ENCODE measurements at regions of chr6 and their contacts with region 1.

Region 1: DNA sequence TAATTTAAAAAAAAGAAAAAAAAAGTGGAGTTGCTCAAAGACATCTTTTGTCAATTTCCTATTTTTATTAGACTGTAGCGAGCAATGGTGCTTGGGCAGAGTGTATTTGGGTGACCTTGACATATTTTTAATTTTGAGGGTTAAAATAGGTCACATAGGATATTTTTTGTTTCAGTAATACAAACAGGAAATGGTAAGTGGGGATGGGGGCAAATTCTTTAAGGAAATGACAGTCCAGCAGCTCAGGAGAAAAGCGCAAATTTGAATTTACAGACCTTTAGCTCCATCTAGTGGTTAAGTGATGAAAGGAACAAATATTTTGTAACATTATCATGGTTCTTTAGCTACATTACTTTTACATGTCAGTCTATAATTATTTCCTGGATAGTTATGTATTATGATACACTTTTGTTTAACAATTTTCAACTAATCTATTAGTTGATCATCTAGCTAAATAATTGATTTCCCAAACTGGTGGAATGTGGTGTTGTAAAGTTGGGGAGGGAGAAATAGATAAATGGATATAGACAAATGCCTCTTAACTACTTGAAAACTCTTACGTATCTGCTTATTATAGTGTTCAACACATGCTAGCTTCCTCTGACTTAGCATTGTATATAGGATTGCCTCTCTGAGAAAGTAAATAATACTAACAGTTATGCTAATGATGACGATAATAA is 10.0 kb downstream of the CITED2 start:
- DNase-seq: peak in 2 of 9 experiments; percentile 64 to 74
- ATAC-seq: peak; percentile 63
- H3K4me3 ChIP-seq: no peak overlapping the region
- H3K4me3 Mint-ChIP-seq: no peak overlapping the region
- H3K27ac ChIP-seq: no peak overlapping the region
- H3K27ac Mint-ChIP-seq: no peak overlapping the region
- H3K4me1 ChIP-seq: peaks cover 4% of the 10 kb centered on the region
- H3K4me1 Mint-ChIP-seq: peaks cover 46% of the 10 kb centered on the region
- H3K27me3 ChIP-seq: no peaks in the 10 kb centered on the region
- H3K27me3 Mint-ChIP-seq: no peaks in the 10 kb centered on the region
- CTCF ChIP-seq: peak; percentile 97

Region 2: GRCh38 chr6:138692058-138692977 is 672.1 kb before region 1 on chr6:
- CTCF ChIA-PET with region 1: no interaction called
- POLR2A ChIA-PET with region 1: no interaction called
- intact Hi-C with region 1: loop called in 1 of 2 experiments (anchors 5 kb)
- DNase-seq: peak; percentile 14 to 78 (median 48)
- ATAC-seq: peak; percentile 68
- H3K4me3 ChIP-seq: peak overlapping the region in 1 of 2 experiments; percentile 23
- H3K4me3 Mint-ChIP-seq: peak overlapping the region; percentile 81
- H3K27ac ChIP-seq: no peak overlapping the region
- H3K27ac Mint-ChIP-seq: no peak overlapping the region
- H3K4me1 ChIP-seq: peaks cover 5% of the 10 kb centered on the region
- H3K4me1 Mint-ChIP-seq: peaks cover 10% of the 10 kb centered on the region
- H3K27me3 ChIP-seq: peaks cover 0 to 6% of the 10 kb centered on the region in 2 experiments
- H3K27me3 Mint-ChIP-seq: peaks cover 30% of the 10 kb centered on the region
- CTCF ChIP-seq: peak; percentile 65

Region 3: DNA sequence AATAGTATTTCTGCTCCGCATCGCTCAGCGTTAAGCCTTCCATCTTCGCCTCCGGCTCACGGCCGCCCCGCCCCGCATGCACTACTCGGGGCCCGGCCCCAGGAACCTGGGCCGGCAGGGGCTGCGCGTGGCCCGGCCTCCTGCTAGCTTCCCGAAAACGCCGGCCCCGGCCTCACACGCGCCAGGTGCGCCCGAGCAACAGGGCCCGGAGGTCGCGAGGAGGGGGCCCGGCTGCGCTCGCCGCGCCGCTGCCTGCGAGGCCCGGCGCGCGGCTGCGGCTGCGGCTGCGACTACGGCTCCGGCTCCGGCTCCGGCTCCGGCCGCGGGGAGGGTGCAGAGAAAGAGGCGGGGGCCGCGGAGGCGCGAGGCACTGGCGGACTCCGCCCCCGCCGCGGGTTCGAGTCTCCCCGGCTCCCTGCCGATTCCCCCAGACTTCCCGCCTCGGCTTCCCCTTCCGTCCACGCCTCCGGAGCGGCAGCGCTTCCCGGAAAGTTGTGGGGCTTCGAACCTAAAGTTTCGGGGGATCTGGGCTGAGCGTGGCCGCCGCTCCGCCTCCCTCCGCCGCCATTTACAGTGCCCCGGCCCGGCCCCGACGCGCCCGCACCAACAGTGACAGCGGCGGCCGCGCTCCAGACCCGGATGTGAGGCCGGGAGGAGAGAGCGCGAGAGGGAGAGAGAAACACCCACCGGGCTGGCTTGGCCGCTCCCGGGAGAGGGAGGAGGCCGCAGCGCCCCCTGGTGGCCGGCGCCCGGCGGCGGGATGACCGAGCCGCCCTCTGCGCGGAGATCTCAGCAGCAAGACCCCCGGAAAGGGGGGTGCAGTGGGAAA is 376.6 kb before region 1 on chr6 and contains the start of gene REPS1:
- CTCF ChIA-PET with region 1: interaction called, 21 read pairs
- POLR2A ChIA-PET with region 1: no interaction called
- intact Hi-C with region 1: loop called in 1 of 2 experiments (anchors 5 kb)
- DNase-seq: peak; percentile 79 to 97 (median 90)
- ATAC-seq: peak; percentile 88
- H3K4me3 ChIP-seq: peak within 1 kb of the TSS; percentile 74 to 79
- H3K4me3 Mint-ChIP-seq: peak within 1 kb of the TSS; percentile 86
- H3K27ac ChIP-seq: peak within 1 kb of the TSS; percentile 68 to 81
- H3K27ac Mint-ChIP-seq: peak within 1 kb of the TSS; percentile 85
- H3K4me1 ChIP-seq: peaks cover 42% of the 10 kb centered on the region
- H3K4me1 Mint-ChIP-seq: peaks cover 6% of the 10 kb centered on the region
- H3K27me3 ChIP-seq: no peaks in the 10 kb centered on the region
- H3K27me3 Mint-ChIP-seq: no peaks in the 10 kb centered on the region
- CTCF ChIP-seq: peak; percentile 99
- total RNA-seq, gene REPS1: 50.4 to 60.3 TPM

Region 4: DNA sequence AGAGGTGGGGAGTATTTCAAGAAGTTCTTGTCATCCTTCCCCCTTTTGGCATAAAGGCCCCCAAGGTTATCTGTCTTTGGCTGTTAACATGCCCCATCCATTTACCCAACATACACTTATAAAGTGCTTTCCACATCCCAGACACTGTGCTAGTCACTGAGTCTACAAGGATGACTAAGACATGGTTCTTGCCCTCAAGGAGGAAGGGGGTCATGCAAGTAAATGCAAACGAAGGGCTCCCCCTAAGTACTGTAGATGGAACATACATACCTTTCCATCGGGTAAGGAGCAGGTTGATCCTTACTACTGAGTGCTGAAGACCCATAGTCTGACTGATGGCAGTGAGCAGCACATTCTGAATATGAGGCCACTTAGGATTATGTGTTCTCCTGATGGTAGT is 191.3 kb before region 1 on chr6:
- CTCF ChIA-PET with region 1: interaction called, 12 read pairs
- POLR2A ChIA-PET with region 1: no interaction called
- intact Hi-C with region 1: loop called in 1 of 2 experiments (anchors 5 kb)
- DNase-seq: peak in 4 of 9 experiments; percentile 32 to 74 (median 50)
- ATAC-seq: peak; percentile 84
- H3K4me3 ChIP-seq: no peak overlapping the region
- H3K4me3 Mint-ChIP-seq: peak overlapping the region; percentile 40
- H3K27ac ChIP-seq: peak overlapping the region in 1 of 2 experiments; percentile 34
- H3K27ac Mint-ChIP-seq: peak overlapping the region; percentile 80
- H3K4me1 ChIP-seq: peaks cover 92% of the 10 kb centered on the region
- H3K4me1 Mint-ChIP-seq: peaks cover 93% of the 10 kb centered on the region
- H3K27me3 ChIP-seq: no peaks in the 10 kb centered on the region
- H3K27me3 Mint-ChIP-seq: no peaks in the 10 kb centered on the region
- CTCF ChIP-seq: no peak

Region 5: GRCh38 chr6:139250296-139251044 is 114.0 kb before region 1 on chr6:
- CTCF ChIA-PET with region 1: interaction called, 13 read pairs
- POLR2A ChIA-PET with region 1: no interaction called
- intact Hi-C with region 1: loop called in 1 of 2 experiments (anchors 1 kb)
- DNase-seq: peak; percentile 22 to 79 (median 57)
- ATAC-seq: peak; percentile 96
- H3K4me3 ChIP-seq: no peak overlapping the region
- H3K4me3 Mint-ChIP-seq: no peak overlapping the region
- H3K27ac ChIP-seq: peak overlapping the region in 1 of 2 experiments; percentile 44
- H3K27ac Mint-ChIP-seq: no peak overlapping the region
- H3K4me1 ChIP-seq: peaks cover 3% of the 10 kb centered on the region
- H3K4me1 Mint-ChIP-seq: peaks cover 30% of the 10 kb centered on the region
- H3K27me3 ChIP-seq: no peaks in the 10 kb centered on the region
- H3K27me3 Mint-ChIP-seq: no peaks in the 10 kb centered on the region
- CTCF ChIP-seq: peak; percentile 53

Region 6: DNA sequence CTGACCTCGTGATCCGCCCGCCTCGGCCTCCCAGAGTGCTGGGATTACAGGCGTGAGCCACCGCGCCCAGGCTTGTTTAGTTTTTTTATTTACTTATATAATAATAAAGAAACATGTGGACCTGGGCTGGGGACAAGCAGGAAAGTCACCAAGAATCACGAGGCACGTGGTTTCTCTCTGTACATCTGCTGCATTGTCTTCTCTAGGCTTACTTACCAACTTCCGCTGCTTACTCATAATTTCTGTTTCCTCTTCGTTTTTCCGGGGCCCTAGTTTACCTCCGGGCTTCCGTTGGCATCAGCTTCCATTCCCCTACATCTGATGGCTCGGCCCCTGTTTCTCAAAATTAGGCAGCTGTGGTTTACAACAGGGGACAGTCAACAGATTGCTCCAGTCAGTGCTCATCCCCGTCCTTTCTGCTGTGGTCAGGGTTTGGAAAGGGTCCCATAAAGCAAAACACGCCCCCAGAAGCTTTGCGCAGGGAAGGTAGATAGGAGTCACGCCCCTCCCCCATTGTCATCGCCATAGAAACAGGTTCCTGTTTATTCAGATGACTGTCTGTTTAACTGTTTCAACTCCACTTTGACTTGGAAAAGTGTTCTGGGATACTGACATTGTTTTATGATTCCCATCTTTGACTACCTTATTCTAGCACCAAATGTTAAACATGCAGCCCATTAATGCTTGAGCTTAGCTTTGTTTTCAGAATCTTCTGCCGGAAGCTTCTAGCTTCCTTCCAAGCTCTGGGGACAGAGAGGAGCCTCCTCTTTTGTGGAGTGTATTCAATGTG is 40.7 kb before region 1 on chr6:
- CTCF ChIA-PET with region 1: interaction called, 4 read pairs
- POLR2A ChIA-PET with region 1: no interaction called
- intact Hi-C with region 1: loop called in 1 of 2 experiments (anchors 2 kb)
- DNase-seq: peak; percentile 56 to 91 (median 84)
- ATAC-seq: peak; percentile 87
- H3K4me3 ChIP-seq: peak overlapping the region; percentile 54 to 59
- H3K4me3 Mint-ChIP-seq: peak overlapping the region; percentile 89
- H3K27ac ChIP-seq: peak overlapping the region; percentile 82 to 97
- H3K27ac Mint-ChIP-seq: peak overlapping the region; percentile 97
- H3K4me1 ChIP-seq: peaks cover 18% of the 10 kb centered on the region
- H3K4me1 Mint-ChIP-seq: peaks cover 35% of the 10 kb centered on the region
- H3K27me3 ChIP-seq: no peaks in the 10 kb centered on the region
- H3K27me3 Mint-ChIP-seq: no peaks in the 10 kb centered on the region
- CTCF ChIP-seq: no peak

Region 7: DNA sequence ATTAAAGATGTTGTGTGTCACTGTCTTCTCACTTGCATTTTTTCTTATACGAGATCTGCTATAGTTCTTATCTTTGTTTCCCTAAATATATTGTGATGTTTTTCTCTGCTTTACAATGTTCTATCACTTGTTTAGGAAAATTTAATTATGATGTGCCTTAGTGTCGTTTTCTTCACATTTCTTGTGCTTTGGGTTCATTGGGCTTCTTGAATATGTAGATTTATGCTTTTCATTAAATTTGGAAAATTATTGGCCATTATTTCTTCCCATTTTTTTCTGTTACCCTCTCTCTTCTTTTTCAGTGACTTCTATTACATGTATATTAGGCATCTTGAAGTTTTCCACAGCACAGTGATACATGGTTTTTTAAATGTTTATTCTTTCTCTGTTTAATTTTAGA is 23.4 kb before region 1 on chr6:
- CTCF ChIA-PET with region 1: no interaction called
- POLR2A ChIA-PET with region 1: no interaction called
- intact Hi-C with region 1: no loop called
- DNase-seq: no peak
- ATAC-seq: no peak
- H3K4me3 ChIP-seq: no peak overlapping the region
- H3K4me3 Mint-ChIP-seq: no peak overlapping the region
- H3K27ac ChIP-seq: no peak overlapping the region
- H3K27ac Mint-ChIP-seq: no peak overlapping the region
- H3K4me1 ChIP-seq: peaks cover 22% of the 10 kb centered on the region
- H3K4me1 Mint-ChIP-seq: peaks cover 25% of the 10 kb centered on the region
- H3K27me3 ChIP-seq: no peaks in the 10 kb centered on the region
- H3K27me3 Mint-ChIP-seq: no peaks in the 10 kb centered on the region
- CTCF ChIP-seq: no peak

Region 8: GRCh38 chr6:139568956-139569548 is 204.6 kb after region 1 on chr6:
- CTCF ChIA-PET with region 1: no interaction called
- POLR2A ChIA-PET with region 1: no interaction called
- intact Hi-C with region 1: no loop called
- DNase-seq: no peak
- ATAC-seq: no peak
- H3K4me3 ChIP-seq: no peak overlapping the region
- H3K4me3 Mint-ChIP-seq: no peak overlapping the region
- H3K27ac ChIP-seq: no peak overlapping the region
- H3K27ac Mint-ChIP-seq: no peak overlapping the region
- H3K4me1 ChIP-seq: no peaks in the 10 kb centered on the region
- H3K4me1 Mint-ChIP-seq: no peaks in the 10 kb centered on the region
- H3K27me3 ChIP-seq: no peaks in the 10 kb centered on the region
- H3K27me3 Mint-ChIP-seq: no peaks in the 10 kb centered on the region
- CTCF ChIP-seq: no peak